ENCODE measurements at regions of chr9 and their contacts with region 1.

Region 1: DNA sequence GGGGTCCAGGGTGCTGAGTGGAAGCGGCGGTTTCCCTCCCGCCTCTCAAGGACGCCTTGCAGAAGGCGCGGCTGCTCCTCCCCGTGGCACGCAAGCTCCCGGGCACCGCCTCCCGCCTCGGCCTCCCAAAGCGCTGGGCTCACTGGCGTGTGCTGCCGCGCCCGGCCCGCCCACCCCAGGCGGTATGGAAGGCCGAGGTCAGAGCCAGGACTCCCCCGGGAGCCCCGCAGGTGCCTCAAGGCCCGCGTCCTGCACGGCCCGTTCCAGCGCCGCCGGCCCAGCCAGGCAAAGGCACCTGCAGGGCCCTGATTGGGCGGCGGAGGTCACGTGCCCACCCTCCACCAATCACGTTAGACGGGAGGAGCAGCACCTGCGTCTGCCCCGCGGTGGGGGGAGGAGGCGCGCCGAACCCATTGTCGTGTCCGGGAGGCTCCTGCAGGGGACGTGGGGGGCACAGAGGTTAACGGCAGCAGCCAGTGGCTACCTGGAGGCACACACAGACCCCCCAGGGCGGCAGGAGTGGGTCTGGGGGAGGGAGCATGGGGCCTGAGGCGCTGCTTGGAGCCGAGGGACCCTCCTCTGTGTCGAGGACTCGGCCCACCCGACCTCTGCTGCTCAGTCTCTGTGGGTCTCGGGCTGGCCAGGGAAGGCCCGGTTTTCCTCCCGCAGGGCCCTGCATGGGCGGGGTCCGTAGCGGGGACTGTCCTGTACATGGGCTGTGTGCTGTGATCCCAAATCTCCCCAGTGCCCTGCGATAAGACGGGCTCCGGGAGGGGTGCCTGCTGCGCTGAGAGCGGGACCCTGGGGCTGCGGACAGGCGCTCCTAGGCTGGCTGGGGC is 2.0 kb upstream of the LCN12 start:
- DNase-seq: peak; percentile 46
- ATAC-seq: peak; percentile 87
- H3K4me3 ChIP-seq: peak overlapping the region; percentile 48 to 63
- H3K27ac ChIP-seq: peak overlapping the region; percentile 87
- H3K4me1 ChIP-seq: peaks cover 30% of the 10 kb centered on the region
- H3K27me3 ChIP-seq: no peaks in the 10 kb centered on the region
- CTCF ChIP-seq: no peak

Region 2: DNA sequence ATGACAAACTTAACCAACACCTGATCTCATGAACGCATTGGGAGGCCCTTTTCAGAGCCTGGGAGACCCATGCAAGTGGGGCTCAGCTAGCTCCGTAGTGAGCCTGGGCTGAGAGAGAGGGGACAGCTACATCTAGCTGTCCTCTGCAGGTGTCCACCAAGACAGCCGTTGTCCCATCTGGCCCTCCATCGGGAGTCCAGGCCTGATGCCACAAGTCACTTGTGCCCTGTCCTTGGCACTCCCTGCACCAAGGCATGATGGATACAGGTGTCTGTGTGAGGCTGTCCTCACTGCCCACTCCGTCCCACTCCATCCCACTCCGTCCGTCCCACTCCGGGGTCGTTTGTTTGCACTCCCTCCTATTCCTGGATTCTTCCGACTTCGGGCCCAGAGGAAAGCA is 81.4 kb before region 1 on chr9:
- CTCF ChIA-PET with region 1: no interaction called
- POLR2A ChIA-PET with region 1: interaction called, 12 read pairs
- in situ Hi-C with region 1: no loop called
- intact Hi-C with region 1: no loop called
- DNase-seq: no peak
- ATAC-seq: no peak
- H3K4me3 ChIP-seq: no peak overlapping the region
- H3K27ac ChIP-seq: no peak overlapping the region
- H3K4me1 ChIP-seq: peaks cover 3% of the 10 kb centered on the region; the same call in 1 of the 2 replicates
- H3K27me3 ChIP-seq: no peaks in the 10 kb centered on the region
- CTCF ChIP-seq: no peak

Region 3: GRCh38 chr9:136978073-136978864 is 28.2 kb after region 1 on chr9:
- CTCF ChIA-PET with region 1: interaction called, 10 read pairs
- POLR2A ChIA-PET with region 1: no interaction called
- in situ Hi-C with region 1: no loop called
- intact Hi-C with region 1: no loop called
- DNase-seq: no peak
- ATAC-seq: peak; percentile 59
- H3K4me3 ChIP-seq: peak overlapping the region; percentile 51 to 54
- H3K27ac ChIP-seq: no peak overlapping the region
- H3K4me1 ChIP-seq: no peaks in the 10 kb centered on the region
- H3K27me3 ChIP-seq: no peaks in the 10 kb centered on the region
- CTCF ChIP-seq: no peak

Region 4: DNA sequence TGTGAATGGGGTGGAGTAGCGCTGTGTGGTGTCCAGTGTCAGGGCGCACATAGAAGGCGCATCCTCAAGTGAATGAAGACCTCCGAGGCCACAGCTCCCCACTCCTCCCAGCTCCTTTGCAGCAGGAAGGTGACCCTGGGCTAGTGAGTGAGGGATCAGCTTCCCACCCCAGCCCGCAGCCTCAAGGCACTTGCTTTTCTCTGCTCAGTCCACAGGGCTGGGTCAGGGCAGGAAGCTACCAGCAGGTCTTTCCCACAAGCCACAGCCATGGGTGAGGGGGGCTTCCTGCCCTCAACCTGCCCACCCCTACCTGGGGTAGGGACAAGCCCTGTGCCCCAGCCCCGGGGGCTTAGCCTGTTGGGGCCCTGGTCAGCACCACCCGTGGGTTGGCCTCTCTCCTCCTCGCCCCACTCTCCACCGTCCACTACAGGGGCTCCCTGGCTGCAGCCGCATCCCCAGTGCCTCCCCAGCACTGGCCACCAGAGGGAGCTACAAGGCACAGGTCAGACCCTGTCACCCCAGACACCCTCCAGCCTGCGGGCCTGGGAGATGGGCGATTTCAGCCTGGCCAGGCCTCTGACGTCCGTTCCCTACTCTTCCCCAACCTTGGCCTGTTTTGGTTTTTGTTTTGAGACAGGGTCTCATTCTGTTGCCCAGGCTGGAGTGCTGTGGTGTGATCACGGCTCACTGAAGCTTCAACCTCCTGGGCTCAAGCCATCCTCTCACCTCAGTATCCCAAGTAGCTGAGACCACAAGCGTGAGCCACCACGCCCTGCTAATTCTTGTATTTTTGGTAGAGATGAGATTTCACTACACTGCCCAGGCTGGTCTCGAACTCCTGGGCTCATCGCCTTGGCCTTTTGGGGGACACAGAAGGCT is 79.3 kb after region 1 on chr9:
- CTCF ChIA-PET with region 1: interaction called, 22 read pairs
- POLR2A ChIA-PET with region 1: no interaction called
- in situ Hi-C with region 1: no loop called
- intact Hi-C with region 1: loop called (anchors 10 kb)
- DNase-seq: peak; percentile 25
- ATAC-seq: peak; percentile 80
- H3K4me3 ChIP-seq: peak overlapping the region in 1 of 2 experiments; percentile 53; a peak in 2 of 4 replicates
- H3K27ac ChIP-seq: no peak overlapping the region
- H3K4me1 ChIP-seq: peaks cover 22% of the 10 kb centered on the region; the same call in 1 of the 2 replicates
- H3K27me3 ChIP-seq: no peaks in the 10 kb centered on the region
- CTCF ChIP-seq: peak; percentile 92

Region 5: DNA sequence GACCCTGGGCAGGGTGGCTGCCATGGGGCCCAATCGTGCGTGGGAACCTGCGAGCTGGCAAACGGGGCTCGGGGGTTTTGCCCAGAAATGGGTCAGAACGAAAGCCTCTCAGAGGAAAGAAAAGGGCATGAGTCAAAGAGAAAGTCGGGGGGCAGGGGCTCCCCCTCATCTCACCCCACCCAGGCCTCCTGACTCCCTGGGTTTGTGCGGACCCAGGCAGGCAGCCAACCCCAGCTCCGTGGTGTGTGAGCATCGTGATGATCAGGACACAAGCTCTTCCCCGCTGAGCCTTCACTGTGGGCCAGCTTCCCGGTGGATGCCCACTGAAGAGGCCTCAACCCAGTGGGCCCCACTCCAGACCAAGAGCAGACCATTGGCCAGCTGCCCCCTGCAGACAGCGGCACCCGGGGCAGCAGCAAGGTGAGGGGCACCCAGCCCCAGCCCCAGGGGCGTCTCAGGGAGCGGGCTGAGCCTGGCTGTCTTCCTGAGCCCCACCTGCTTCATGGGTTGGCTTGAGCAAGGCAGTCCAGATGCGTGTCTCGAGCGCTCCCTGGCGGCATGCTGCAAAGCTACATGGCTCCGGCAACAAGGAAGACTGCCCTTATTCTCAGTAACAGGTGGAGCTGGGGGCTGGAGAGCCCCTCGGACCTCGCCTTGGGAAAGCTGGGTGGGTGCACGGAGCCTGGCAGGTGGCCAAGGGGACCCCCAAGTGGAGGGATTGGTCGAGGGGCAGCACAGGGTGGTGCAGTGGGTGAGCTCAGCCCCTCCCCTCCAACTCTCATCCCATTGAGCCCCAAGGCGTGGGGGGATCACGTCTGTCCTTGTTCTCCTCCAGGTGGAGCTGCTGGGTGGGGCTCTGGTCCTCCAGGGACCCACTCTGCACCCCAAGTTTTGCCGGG is 85.1 kb after region 1 on chr9:
- CTCF ChIA-PET with region 1: interaction called, 22 read pairs
- POLR2A ChIA-PET with region 1: no interaction called
- in situ Hi-C with region 1: no loop called
- intact Hi-C with region 1: loop called (anchors 10 kb)
- DNase-seq: peak; percentile 55
- ATAC-seq: peak; percentile 93
- H3K4me3 ChIP-seq: peak overlapping the region in 1 of 2 experiments; percentile 14; a peak in 1 of 4 replicates
- H3K27ac ChIP-seq: no peak overlapping the region
- H3K4me1 ChIP-seq: peaks cover 5% of the 10 kb centered on the region
- H3K27me3 ChIP-seq: no peaks in the 10 kb centered on the region
- CTCF ChIP-seq: peak; percentile 90